RWPE1 (cell line): ENCODE measurements at regions of chr11 and their contacts with region 1.

Region 1: DNA sequence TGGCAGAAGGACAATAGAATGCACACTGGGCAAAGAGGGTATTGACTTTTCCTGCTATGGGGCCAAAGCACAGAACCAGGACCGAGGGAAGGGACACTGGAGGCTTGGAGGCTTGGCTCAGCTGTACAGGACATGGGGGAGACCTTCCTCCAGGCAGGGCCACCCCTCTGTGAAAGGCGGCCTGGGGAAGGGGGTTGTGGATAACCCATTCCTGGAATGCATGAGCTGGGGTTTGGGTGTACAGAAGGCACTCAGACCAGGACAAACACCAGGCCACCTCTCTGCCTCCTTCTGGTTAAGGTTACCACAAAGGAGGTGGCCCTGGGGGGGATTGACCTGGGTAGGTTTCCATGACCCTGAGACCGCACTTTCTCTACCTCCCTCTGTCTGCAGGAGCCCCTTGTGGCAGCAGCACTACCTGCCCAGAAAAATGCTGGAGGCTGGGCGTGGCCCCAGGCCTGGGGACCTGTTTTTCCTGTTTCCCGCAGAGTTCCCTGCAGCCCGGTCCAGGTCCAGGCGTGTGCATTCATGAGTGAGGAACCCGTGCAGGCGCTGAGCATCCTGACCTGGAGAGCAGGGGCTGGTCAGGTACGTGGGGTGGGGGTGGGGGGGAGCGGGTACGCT is 9.6 kb downstream of the P2RY2 start:
- DNase-seq: peak; percentile 86
- H3K27ac ChIP-seq: 0 out of 2 replicates have a peak overlapping the region, but pooled peaks have one; percentile 7
- CTCF ChIP-seq: no peak

Region 2: DNA sequence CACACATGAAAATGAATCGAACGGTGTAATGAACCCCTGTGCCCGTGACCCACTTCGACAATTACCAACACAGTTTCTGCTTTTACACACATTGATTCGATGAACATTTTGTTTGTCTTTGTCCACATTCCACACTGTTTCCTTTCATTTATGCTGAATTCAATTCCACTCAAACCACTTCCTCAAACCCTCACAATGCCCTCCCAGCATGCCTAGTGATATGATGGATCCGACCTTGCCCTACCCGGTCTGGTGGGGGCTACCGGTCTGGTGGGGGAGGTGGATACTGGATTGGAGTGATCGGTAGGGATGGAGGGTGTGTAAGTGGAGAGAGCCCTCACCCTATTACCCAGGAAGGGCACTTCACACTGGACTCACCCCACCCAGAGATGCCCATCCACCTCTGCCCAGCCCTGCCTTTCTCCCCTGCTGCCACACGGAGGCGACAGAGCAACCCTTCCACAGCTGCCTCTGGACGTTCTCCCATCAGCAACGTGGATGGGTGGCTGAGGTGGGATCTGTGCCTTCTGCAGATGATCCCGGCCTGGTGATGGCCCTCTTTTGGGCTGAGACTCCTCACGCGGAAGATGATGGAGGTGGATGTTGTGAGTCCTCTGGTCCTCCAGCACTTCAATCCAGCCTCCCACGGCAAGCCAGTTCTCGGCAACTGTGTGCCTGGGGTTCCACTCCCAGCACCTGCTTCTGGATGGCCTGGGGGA is 42.6 kb before region 1 on chr11:
- CTCF ChIA-PET with region 1: interaction called, 10 read pairs
- POLR2A ChIA-PET with region 1: no interaction called
- DNase-seq: peak; percentile 64
- H3K27ac ChIP-seq: peak overlapping the region; percentile 92
- CTCF ChIP-seq: no peak; the same call in 1 of the 2 replicates